ENCODE measurements at regions of chr13 and their contacts with region 1.

Region 1: GRCh38 chr13:48233046-48233907 is at the start of gene ITM2B:
- DNase-seq: peak in 1 of 2 donors; percentile 84
- H3K4me3 ChIP-seq: peak within 1 kb of the TSS; percentile 99 to 100
- H3K27ac ChIP-seq: peak within 1 kb of the TSS; percentile 100
- H3K4me1 ChIP-seq: peaks cover 6 to 23% of the 10 kb centered on the region in 2 donors
- H3K27me3 ChIP-seq: no peaks in the 10 kb centered on the region
- CTCF ChIP-seq: peak; percentile 24 to 54 (median 47)
- total RNA-seq, gene ITM2B: 345 TPM

Region 2: GRCh38 chr13:48094781-48095502 is 138.3 kb before region 1 on chr13 and contains the start of gene MED4:
- intact Hi-C with region 1: loop called (anchors 5 kb)
- DNase-seq: peak; percentile 75 to 98
- H3K4me3 ChIP-seq: peak within 1 kb of the TSS; percentile 80 to 86
- H3K27ac ChIP-seq: peak within 1 kb of the TSS; percentile 83 to 85
- H3K4me1 ChIP-seq: peaks cover 8 to 15% of the 10 kb centered on the region in 2 donors
- H3K27me3 ChIP-seq: no peaks in the 10 kb centered on the region
- CTCF ChIP-seq: peak; percentile 98 to 99 (median 99)
- total RNA-seq, gene MED4: 8.6 TPM

Region 3: DNA sequence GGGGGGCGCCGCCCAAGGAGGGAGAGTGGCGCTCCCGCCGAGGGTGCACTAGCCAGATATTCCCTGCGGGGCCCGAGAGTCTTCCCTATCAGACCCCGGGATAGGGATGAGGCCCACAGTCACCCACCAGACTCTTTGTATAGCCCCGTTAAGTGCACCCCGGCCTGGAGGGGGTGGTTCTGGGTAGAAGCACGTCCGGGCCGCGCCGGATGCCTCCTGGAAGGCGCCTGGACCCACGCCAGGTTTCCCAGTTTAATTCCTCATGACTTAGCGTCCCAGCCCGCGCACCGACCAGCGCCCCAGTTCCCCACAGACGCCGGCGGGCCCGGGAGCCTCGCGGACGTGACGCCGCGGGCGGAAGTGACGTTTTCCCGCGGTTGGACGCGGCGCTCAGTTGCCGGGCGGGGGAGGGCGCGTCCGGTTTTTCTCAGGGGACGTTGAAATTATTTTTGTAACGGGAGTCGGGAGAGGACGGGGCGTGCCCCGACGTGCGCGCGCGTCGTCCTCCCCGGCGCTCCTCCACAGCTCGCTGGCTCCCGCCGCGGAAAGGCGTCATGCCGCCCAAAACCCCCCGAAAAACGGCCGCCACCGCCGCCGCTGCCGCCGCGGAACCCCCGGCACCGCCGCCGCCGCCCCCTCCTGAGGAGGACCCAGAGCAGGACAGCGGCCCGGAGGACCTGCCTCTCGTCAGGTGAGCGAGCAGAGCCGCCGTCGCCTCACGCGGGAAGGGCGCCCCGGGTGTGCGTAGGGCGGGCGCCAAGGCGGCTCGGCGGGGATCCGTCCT is 70.3 kb after region 1 on chr13 and contains the start of gene RB1:
- intact Hi-C with region 1: loop called (anchors 1 kb)
- DNase-seq: peak; percentile 73 to 96
- H3K4me3 ChIP-seq: peak within 1 kb of the TSS; percentile 72 to 97
- H3K27ac ChIP-seq: peak within 1 kb of the TSS; percentile 98 to 99
- H3K4me1 ChIP-seq: peaks cover 0 to 20% of the 10 kb centered on the region in 2 donors
- H3K27me3 ChIP-seq: no peaks in the 10 kb centered on the region
- CTCF ChIP-seq: no peak
- total RNA-seq, gene RB1: 10.6 TPM

Region 4: DNA sequence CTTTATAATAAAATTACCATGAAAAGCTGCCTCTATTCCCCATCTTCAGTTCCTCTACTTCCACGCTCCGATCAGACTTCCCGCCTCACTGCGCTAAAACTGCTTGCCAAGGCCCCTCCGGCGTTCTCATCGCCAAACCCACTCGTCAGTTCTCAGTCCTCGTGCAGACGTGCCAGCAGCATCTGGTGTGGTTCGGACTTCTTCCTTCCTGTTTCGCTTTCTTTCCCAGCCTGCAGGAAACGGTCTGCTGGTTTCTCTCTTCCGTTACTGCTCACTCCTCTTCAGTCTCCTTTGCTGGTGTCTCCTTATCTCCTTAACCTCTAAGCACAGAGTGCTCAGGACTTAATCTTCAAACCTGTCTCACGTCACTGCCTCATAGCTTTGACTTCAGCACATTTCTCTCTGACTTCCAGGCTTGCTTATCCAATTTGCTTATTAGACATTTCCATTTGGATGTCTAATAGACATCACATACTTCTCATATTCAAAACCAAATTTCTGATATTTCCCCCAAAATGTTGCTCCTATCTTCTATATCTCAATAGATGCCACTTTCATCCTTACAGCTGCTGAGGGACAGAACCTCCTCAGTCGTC is 259.3 kb after region 1 on chr13:
- intact Hi-C with region 1: no loop called
- DNase-seq: peak; percentile 47 to 78
- H3K4me3 ChIP-seq: peak overlapping the region in 1 of 2 donors; percentile 8
- H3K27ac ChIP-seq: peak overlapping the region; percentile 28 to 50
- H3K4me1 ChIP-seq: no peaks in the 10 kb centered on the region
- H3K27me3 ChIP-seq: no peaks in the 10 kb centered on the region
- CTCF ChIP-seq: no peak

Region 5: GRCh38 chr13:48511621-48512230 is 278.4 kb after region 1 on chr13:
- intact Hi-C with region 1: no loop called
- DNase-seq: no peak
- H3K4me3 ChIP-seq: no peak overlapping the region
- H3K27ac ChIP-seq: no peak overlapping the region
- H3K4me1 ChIP-seq: no peaks in the 10 kb centered on the region
- H3K27me3 ChIP-seq: no peaks in the 10 kb centered on the region
- CTCF ChIP-seq: no peak

Region 6: DNA sequence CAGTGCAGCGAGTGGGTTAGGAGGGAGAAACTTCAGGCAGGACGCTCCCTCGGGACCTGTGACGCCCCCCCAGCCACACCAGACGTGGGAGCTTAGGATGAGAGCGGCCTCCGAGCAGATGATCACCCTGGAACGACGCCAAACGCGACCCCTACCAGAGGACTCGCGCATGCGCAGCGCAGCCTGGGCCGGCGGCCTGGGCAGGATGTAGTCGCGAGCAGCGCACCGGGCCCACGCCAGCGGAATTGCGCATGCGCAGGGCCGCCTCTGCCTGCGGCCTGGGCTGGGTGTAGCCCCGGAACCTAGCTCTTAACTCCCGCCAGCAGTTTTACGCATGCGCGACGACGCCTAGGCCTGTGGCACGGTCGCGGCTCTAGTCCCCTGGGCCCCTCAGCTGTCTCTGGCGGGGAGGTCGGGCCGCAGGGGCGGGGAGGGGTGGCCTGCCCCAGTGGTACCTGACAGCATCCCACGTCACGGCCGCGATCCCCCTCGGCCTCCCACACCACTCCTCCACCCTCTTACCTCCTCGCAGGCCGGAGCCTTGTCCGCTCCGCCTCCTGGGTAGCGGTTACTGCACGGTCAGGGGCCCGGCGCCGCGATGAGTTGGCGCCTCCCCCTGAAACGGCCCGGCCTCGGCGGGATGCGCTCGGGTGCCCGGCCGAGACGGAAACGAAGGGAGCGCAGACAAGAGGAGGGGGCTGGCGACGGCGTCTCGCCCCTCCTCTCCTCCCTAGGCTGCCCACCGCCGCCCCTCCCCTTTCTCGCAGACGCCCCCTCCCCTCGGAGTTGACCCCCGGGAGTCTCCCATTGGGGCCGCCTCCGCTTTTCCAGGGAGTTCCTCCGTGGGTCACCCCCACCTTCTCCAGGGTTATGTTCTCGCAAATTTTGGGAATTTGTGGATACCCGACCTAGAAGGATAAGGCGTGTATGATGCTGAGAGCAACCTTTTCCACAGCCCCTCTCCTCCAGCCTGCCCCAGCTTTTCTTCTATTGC is 299.5 kb after region 1 on chr13 and contains the start of gene RCBTB2:
- intact Hi-C with region 1: loop called (anchors 1 kb)
- DNase-seq: peak; percentile 91 to 99
- H3K4me3 ChIP-seq: peak within 1 kb of the TSS; percentile 78 to 83
- H3K27ac ChIP-seq: peak within 1 kb of the TSS; percentile 98 to 99
- H3K4me1 ChIP-seq: peaks cover 0 to 6% of the 10 kb centered on the region in 2 donors
- H3K27me3 ChIP-seq: no peaks in the 10 kb centered on the region
- CTCF ChIP-seq: no peak
- total RNA-seq, gene RCBTB2: 1.8 TPM

Region 7: GRCh38 chr13:49443704-49444523 is 1210.6 kb after region 1 on chr13 and contains the starts of genes CAB39L and SETDB2:
- intact Hi-C with region 1: loop called (anchors 10 kb)
- DNase-seq: peak; percentile 99 to 100
- H3K4me3 ChIP-seq: peak within 1 kb of the TSS; percentile 75 to 84
- H3K27ac ChIP-seq: peak within 1 kb of the TSS; percentile 96 to 99
- H3K4me1 ChIP-seq: peaks cover 2 to 20% of the 10 kb centered on the region in 2 donors
- H3K27me3 ChIP-seq: no peaks in the 10 kb centered on the region
- CTCF ChIP-seq: peak; percentile 26 to 45 (median 42)
- total RNA-seq, gene CAB39L: 30.1 TPM
- total RNA-seq, gene SETDB2: 7.2 TPM